Activated naive CD4-positive, alpha-beta T cell treated with anti-CD3 and anti-CD28 coated beads for 36 hours (primary cell): ENCODE measurements at regions of chr2 and their contacts with region 1.

Region 1: DNA sequence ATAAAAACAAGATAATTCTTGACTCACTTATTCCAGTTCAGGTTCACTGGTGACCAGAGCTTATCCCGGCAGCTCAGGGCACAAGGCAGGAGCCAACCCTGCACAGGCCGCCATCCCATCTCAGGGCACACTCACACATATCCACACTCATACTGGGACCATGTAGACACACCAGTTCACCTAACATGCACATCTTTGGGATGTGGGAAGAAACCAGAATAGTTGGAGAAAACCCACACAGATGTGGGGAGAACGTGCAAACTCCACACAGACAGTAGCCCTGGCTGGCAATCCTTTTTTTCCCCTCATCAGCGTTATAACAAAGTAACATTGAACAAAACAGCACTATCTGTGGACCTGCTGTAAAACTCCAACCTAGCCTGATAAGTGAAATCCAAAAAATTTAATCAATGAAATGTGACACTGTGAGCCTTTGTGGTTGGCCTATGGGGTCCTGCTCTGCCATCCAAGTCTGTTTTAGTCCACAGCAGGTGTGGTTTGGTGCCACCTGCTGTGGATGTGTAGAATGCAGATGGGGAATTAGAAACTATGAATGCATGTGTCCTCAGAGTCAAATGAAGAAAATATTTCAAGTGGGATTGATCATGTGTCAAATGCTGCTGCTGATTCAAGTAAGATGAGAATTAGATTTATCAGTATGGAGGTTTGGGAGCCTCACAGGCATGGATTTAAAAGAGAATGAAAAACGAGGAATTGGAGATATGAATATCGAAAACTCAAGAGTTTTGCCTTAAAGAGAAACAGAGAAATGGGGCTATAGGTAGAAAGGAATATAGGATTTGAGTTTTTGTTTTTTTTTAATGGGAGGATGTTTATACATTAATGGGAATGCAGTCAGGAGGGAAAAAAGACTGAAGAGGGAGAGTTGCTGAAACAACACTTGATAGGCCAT is 47.0 kb downstream of the UGP2 start:
- DNase-seq: peak; percentile 74
- H3K4me3 Mint-ChIP-seq: no peak overlapping the region
- H3K27ac Mint-ChIP-seq: peak overlapping the region; percentile 53
- H3K4me1 Mint-ChIP-seq: peaks cover 11% of the 10 kb centered on the region
- H3K27me3 Mint-ChIP-seq: no peaks in the 10 kb centered on the region

Region 2: DNA sequence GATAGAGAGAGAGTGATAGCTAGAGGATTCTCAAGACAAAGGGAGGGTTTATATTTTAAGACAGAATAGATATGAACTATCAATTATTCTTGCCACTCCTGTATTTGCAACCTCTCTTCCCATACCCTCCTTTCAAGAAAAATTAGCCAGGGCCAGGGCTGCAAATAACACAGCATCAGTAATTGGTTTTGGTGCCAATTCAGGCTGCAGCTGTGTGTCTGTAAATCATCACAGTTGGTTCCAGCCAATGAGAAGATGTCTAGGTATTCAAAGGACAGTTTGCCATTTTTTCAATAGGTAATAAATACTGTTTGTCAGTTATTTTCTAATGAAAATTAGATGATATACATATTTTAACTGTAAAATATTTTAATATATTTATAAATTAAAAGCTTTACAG is 374.0 kb before region 1 on chr2:
- CTCF ChIA-PET with region 1: no interaction called
- intact Hi-C with region 1: no loop called
- DNase-seq: no peak
- H3K4me3 Mint-ChIP-seq: no peak overlapping the region
- H3K27ac Mint-ChIP-seq: no peak overlapping the region
- H3K4me1 Mint-ChIP-seq: no peaks in the 10 kb centered on the region
- H3K27me3 Mint-ChIP-seq: no peaks in the 10 kb centered on the region

Region 3: GRCh38 chr2:63692002-63692606 is 196.6 kb before region 1 on chr2:
- CTCF ChIA-PET with region 1: interaction called, 6 read pairs
- intact Hi-C with region 1: loop called (anchors 1 kb)
- DNase-seq: peak; percentile 40
- H3K4me3 Mint-ChIP-seq: no peak overlapping the region
- H3K27ac Mint-ChIP-seq: no peak overlapping the region
- H3K4me1 Mint-ChIP-seq: no peaks in the 10 kb centered on the region
- H3K27me3 Mint-ChIP-seq: no peaks in the 10 kb centered on the region

Region 4: DNA sequence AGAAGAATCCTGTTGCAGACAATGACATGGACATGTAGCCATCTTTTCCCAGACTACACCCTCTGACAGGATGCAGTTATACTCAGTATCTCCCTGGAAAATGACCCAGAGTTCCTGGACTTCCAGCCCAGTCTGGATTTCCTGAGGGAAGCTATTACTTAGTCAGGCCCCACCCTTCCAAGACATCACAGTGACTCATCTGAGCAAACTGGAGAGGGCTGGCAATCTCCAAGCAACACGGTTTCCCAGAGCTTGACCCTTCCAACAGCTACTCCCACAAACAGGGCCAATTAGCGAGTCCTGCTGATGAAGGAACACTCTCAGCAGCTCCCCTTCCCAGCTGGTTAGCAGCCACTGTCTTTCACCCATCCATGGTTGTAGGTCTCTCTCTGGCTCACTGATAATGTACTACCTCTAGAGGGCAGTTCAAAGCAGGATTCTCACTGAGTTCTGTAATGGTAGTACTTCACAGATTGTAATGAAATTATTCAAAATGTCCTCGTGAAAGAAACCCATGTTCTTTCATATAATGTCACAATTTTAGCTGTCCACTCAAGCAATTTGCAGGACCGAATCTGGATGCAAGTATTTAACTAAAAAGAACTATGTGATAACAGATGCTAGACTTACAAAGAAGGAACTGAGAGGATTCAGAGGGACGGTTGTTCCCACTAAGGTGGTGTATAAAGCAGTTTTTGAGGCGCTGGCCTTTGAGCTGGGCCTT is 189.8 kb before region 1 on chr2:
- CTCF ChIA-PET with region 1: interaction called, 7 read pairs
- intact Hi-C with region 1: loop called (anchors 1 kb)
- DNase-seq: peak; percentile 22
- H3K4me3 Mint-ChIP-seq: no peak overlapping the region
- H3K27ac Mint-ChIP-seq: no peak overlapping the region
- H3K4me1 Mint-ChIP-seq: no peaks in the 10 kb centered on the region
- H3K27me3 Mint-ChIP-seq: no peaks in the 10 kb centered on the region

Region 5: DNA sequence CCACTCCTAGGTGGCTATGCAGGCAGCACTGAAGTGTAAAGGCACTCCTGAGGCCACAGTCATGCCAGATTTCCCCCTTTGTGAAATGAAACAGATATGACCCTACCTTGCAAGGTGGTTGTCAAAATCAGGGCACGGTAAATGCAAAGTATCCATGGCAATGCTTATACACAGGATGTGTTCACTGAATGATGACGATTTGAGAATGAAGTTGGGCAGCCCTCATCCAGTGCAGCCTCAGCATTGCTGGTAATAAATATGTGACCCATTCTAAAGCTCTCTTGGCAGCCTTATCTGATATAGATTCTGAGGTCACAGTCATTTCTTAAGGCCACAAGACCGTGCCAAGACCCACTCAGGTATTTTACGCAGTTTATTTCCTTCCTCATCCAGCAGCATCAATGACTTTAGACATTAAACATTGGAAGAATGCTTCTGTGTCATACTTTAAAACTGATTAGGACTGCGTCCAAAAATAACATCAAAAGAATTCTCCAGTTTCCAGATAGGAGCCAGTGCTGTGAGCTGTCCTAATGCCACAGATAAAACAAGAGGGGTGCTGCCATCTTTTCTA is 890.5 kb after region 1 on chr2:
- CTCF ChIA-PET with region 1: no interaction called
- intact Hi-C with region 1: no loop called
- DNase-seq: no peak
- H3K4me3 Mint-ChIP-seq: no peak overlapping the region
- H3K27ac Mint-ChIP-seq: no peak overlapping the region
- H3K4me1 Mint-ChIP-seq: peaks cover 2% of the 10 kb centered on the region
- H3K27me3 Mint-ChIP-seq: no peaks in the 10 kb centered on the region